ENCODE measurements at regions of chr14 and their contacts with region 1.

Region 1: DNA sequence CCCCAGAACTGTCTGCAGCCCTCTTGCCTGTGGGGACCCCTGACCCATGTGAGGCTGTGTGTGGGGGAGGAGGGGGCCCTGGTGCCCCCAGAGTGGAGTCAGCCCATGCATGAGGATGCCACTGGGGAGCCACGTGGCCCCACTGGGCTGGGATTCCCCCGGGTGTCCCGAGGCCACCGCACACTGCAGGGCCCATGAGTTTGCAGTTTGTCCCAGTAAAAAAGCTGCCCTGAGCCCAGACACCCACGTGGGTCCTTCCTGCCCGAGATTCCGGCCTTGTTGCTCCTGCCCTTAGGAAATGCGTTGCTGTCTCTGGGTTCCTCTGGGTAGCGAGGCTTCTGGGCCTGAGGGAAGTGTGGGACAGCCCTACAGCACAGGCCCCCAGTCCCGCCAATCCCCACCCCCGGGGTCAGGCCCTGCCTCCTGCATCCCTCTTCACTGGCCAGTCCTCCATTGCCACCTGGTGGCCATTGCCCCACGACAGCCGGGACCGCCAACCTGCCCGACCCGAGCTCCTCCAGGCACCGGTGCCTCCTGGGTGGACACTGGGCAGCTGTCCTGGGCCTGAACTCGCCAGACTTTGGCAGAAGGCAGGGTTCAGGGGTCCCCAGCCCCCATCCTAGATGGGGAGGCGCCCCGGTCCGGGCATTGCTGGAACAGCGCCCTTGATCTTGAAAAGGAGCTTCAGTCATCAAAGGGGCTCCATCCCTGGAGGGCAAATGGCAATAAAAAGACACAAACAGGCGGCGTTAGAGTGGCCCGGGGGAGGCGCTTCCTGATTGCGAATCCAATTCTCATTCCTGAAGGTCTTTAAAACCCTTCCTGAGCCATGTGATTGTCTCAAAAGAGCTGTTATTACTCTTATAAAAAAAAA is 15.6 kb upstream of the C14orf180 start:
- DNase-seq: peak; percentile 78
- ATAC-seq: peak; percentile 91
- H3K4me3 Mint-ChIP-seq: no peak overlapping the region
- H3K27ac Mint-ChIP-seq: no peak overlapping the region
- H3K4me1 Mint-ChIP-seq: no peaks in the 10 kb centered on the region
- H3K27me3 Mint-ChIP-seq: peaks cover 8% of the 10 kb centered on the region
- CTCF ChIP-seq: peak; percentile 66

Region 2: DNA sequence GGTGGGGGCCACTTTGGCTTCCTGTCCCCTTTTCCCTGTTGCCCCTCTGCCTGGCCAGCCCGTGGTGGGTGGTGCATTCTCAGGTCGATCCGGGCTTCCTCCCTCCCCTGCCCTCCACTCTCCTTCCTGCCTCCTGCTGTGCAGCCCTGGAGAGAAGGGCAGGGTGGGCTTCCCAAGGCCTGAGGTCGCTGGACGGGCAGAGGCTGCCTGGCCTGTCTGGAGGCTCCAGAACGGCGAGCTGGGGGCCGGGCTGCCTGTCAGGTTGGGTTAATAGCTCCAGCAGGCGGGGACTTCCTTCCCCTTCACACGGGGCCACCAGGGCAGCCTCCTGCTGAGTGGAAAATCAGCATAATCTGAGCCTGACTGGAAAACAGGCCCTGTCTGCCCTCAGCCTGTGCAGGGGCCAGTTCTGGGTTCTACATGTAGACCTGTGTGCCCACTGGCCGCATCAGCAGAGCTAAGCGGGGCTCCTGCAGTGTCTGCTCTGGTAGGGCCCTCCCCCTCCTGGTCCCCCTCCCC is 414.3 kb before region 1 on chr14:
- CTCF ChIA-PET with region 1: no interaction called
- POLR2A ChIA-PET with region 1: no interaction called
- intact Hi-C with region 1: loop called (anchors 10 kb)
- DNase-seq: peak; percentile 67
- ATAC-seq: peak; percentile 92
- H3K4me3 Mint-ChIP-seq: no peak overlapping the region
- H3K27ac Mint-ChIP-seq: no peak overlapping the region
- H3K4me1 Mint-ChIP-seq: no peaks in the 10 kb centered on the region
- H3K27me3 Mint-ChIP-seq: no peaks in the 10 kb centered on the region
- CTCF ChIP-seq: no peak

Region 3: GRCh38 chr14:104462651-104463630 is 101.0 kb before region 1 on chr14:
- CTCF ChIA-PET with region 1: no interaction called
- POLR2A ChIA-PET with region 1: no interaction called
- intact Hi-C with region 1: no loop called
- DNase-seq: no peak
- ATAC-seq: peak; percentile 42
- H3K4me3 Mint-ChIP-seq: no peak overlapping the region
- H3K27ac Mint-ChIP-seq: no peak overlapping the region
- H3K4me1 Mint-ChIP-seq: peaks cover 8% of the 10 kb centered on the region
- H3K27me3 Mint-ChIP-seq: peaks cover 43% of the 10 kb centered on the region
- CTCF ChIP-seq: no peak

Region 4: DNA sequence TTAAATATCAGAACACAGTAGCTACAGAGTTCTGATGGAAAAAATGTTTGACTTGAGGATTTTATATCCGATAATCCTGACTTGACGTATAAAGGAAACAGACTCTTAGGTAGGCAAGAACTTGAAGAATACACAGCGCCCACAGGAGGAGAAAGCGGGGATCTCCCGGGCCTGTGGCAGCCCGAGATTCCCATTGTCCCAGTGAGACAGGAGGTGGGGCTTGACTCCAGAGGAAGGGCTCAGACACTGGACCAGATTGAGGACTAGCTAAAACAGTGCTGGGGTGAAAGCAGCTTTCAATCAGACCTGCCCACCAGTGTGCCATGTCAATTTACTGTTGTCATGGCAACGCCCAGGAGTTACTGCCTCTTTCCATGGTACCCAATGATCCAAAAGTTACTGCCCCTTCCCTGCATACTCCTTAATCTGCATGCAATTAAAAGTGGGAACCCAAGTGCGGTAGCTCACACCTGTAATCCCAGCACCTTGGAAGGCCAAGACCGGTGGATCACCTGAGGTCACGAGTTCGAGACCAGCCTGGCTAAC is 35.4 kb before region 1 on chr14:
- CTCF ChIA-PET with region 1: no interaction called
- POLR2A ChIA-PET with region 1: no interaction called
- intact Hi-C with region 1: no loop called
- DNase-seq: no peak
- ATAC-seq: no peak
- H3K4me3 Mint-ChIP-seq: no peak overlapping the region
- H3K27ac Mint-ChIP-seq: no peak overlapping the region
- H3K4me1 Mint-ChIP-seq: peaks cover 6% of the 10 kb centered on the region
- H3K27me3 Mint-ChIP-seq: peaks cover 8% of the 10 kb centered on the region
- CTCF ChIP-seq: no peak

Region 5: GRCh38 chr14:104545151-104545941 is 18.6 kb before region 1 on chr14:
- CTCF ChIA-PET with region 1: no interaction called
- POLR2A ChIA-PET with region 1: no interaction called
- intact Hi-C with region 1: no loop called
- DNase-seq: no peak
- ATAC-seq: no peak
- H3K4me3 Mint-ChIP-seq: no peak overlapping the region
- H3K27ac Mint-ChIP-seq: no peak overlapping the region
- H3K4me1 Mint-ChIP-seq: no peaks in the 10 kb centered on the region
- H3K27me3 Mint-ChIP-seq: peaks cover 13% of the 10 kb centered on the region
- CTCF ChIP-seq: no peak

Region 6: GRCh38 chr14:104580961-104581360 is 17.0 kb after region 1 on chr14:
- CTCF ChIA-PET with region 1: no interaction called
- POLR2A ChIA-PET with region 1: no interaction called
- intact Hi-C with region 1: no loop called
- DNase-seq: no peak
- ATAC-seq: no peak
- H3K4me3 Mint-ChIP-seq: no peak overlapping the region
- H3K27ac Mint-ChIP-seq: no peak overlapping the region
- H3K4me1 Mint-ChIP-seq: no peaks in the 10 kb centered on the region
- H3K27me3 Mint-ChIP-seq: peaks cover 2% of the 10 kb centered on the region
- CTCF ChIP-seq: no peak